ENCODE measurements at regions of chr13 and their contacts with region 1.

Region 1: DNA sequence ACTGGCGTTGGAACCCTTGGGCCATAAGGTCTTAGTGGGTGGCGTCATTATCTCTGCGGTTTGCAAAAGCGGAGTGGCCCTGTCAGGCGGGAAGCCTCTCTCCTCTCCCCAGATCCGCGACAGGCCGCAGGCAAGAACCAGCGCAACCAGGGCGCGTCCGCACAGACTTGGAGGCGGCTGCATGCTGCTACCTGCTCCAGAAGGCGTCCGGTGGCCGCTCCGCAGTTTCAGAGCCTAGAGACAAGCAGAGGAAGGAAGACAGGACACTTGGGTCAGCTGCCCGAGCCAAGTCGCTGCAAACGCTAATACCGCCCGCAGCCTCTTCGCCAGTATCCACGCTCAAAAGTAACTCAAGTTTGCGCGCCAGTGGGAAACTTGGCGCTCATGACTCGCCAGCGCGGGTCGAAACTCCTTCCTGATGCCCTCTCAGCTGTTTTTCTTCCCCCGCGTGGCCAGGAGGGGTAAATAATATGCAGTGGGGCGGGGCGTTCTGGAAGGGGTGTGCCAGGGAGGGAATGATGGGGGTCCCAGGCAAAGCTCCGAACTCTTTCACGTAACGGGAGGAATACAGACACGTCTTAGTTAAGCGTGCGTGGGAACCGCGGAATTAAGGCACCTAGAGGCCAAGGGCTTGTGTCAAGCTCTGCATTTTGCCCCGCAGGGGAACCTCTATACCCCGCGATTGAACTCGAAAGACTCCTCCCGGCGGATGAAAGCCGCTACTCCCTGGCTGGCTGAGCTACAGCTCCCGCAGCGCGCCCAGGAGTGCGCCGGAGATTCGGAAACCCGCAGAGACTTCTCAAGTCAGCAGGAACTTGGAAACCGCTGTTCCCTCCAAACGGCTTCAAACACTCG is at the start of gene EDNRB:
- DNase-seq: no peak
- H3K4me3 Mint-ChIP-seq: no peak within 1 kb of the TSS
- H3K27ac Mint-ChIP-seq: no peak within 1 kb of the TSS
- H3K4me1 Mint-ChIP-seq: peaks cover 5% of the 10 kb centered on the region
- H3K27me3 Mint-ChIP-seq: peaks cover 31% of the 10 kb centered on the region
- total RNA-seq, gene EDNRB: not detected in 2 replicates

Region 2: GRCh38 chr13:78012040-78012439 is 93.4 kb after region 1 on chr13:
- intact Hi-C with region 1: no loop called
- DNase-seq: no peak
- H3K4me3 Mint-ChIP-seq: no peak overlapping the region
- H3K27ac Mint-ChIP-seq: no peak overlapping the region
- H3K4me1 Mint-ChIP-seq: no peaks in the 10 kb centered on the region
- H3K27me3 Mint-ChIP-seq: peaks cover 13% of the 10 kb centered on the region

Region 3: DNA sequence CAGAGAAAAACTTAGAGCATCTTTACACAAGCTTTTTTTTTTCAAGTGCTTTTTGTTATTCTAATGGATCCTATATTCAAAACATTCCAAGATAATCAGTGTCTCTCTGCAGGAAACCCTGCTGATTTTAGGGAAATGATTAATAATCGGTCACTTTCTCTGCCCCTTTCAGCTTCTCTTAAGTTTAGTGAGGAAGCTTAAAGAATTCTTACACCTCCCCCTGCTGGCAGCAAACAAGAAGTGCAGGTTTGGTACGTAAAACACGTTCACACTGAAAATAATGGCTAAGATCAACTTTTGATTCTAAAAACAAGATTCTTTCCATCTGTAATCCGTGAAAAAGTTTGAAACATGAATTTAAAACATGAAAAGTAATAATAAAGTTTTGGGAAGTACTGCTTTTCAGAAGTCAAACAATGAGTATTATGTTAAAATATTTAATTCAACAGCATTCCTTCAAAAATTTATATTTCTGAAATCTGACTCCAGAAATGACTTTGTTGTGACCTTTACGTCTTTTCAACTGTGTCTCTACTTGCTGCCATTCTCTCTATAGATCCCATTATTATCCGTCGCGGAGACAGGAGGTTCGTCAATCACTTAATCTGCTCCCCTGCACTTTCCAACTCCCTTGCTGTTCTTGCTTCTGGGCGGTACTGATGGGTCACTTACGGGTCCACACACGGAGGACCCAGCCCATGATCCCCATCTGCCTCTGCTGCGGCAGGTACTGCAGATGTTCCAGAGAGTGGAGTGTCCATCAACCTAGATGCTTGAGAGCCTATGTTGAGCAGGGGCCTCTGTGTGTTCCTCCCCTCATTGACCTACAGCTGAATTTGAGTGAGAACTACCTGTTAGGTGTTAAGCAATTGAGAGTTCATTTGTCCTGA is 203.1 kb after region 1 on chr13:
- intact Hi-C with region 1: loop called (anchors 10 kb)
- DNase-seq: no peak
- H3K4me3 Mint-ChIP-seq: no peak overlapping the region
- H3K27ac Mint-ChIP-seq: no peak overlapping the region
- H3K4me1 Mint-ChIP-seq: no peaks in the 10 kb centered on the region
- H3K27me3 Mint-ChIP-seq: no peaks in the 10 kb centered on the region

Region 4: DNA sequence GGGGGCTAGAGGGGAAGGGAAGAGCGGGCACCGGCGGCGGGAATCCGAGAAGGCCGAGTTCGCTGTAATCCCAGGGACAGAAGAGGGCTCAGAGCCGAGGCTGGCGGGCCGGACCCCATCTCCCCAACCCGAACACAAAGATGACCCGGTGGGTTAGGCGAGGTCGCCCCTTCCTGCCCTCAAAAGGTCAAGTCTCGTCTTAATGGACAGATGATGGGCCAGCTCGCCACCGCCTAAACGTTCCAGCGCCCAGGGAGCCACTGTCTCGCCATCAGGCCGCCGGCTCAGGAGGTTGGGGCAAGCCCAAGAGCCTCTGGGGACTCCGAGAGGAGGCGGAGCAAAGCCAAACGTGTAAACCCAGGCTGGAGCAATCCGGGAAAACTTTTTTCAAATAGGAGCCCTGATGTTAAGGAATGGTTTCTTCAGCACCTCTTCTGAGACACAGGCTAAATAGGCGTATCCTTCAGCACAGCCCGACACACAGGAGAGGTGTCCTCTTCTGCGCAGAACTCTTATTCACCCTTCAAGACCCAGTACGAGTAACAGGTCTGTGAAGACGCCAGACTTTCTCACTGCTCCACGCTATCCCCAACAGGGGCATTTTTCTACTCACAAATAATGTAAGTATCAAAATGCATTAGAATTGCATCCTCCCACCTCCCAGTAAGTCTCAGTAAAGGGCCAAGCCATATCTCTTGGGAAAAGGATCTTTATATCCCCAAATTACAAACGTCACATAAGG is 691.0 kb after region 1 on chr13:
- intact Hi-C with region 1: loop called (anchors 5 kb)
- DNase-seq: no peak
- H3K4me3 Mint-ChIP-seq: peak overlapping the region; percentile 58
- H3K27ac Mint-ChIP-seq: no peak overlapping the region
- H3K4me1 Mint-ChIP-seq: peaks cover 16% of the 10 kb centered on the region
- H3K27me3 Mint-ChIP-seq: peaks cover 66% of the 10 kb centered on the region

Measured in activated T-helper 2 cell treated with anti-CD3 and anti-CD28 coated beads, Interferon-gamma antibody, Interleukin-2, Interleukin-4, amounts not matched to agents 10 μg/mL and 5 μg/mL and 100 μg/mL, durations not matched to agents 14 hours and 24 hours and 36 hours (primary cell).